Naive thymus-derived CD4-positive, alpha-beta T cell (primary cell): ENCODE measurements at regions of chr12 and their contacts with region 1.

Region 1: DNA sequence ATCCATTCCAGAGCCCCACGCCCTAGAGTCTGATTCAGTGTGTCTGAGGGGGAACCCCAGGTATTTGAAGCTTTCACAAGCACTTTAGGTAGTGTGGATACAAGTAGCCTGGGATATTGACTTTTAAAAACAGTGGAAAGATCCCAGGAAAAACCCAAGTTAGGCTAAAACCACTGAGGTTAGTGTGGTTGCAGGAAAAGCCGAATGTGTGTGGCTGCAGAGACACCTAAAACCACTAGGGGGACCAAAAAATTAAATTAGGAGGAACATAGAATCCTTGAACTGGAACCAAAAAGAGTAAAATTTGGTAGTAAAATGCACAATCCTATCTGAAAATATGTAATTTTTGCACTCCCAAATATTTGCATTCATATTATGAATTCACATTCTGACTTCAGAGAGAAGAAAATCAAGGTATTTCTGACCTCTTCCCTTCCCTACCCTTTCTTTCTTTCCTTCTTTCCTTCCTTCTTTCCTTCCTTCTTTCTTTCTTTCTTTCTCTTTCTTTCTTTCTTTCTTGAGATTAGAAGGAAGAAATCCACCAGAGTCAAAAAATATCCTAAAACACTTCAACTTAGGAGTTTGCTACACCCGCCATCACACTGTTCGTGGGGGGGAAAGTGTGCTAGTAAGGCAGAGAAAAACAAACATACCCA is 37.8 kb downstream of the SLCO1A2 start:
- DNase-seq: peak in 4 of 9 donors; percentile 4 to 14 (median 8)
- ATAC-seq: peak; percentile 38
- H3K4me3 ChIP-seq: no peak overlapping the region
- H3K4me3 Mint-ChIP-seq: no peak overlapping the region
- H3K27ac ChIP-seq: no peak overlapping the region
- H3K27ac Mint-ChIP-seq: no peak overlapping the region
- H3K4me1 ChIP-seq: no peaks in the 10 kb centered on the region
- H3K4me1 Mint-ChIP-seq: peaks cover 0 to 4% (median 0%) of the 10 kb centered on the region in 7 donors
- H3K27me3 ChIP-seq: no peaks in the 10 kb centered on the region
- H3K27me3 Mint-ChIP-seq: peaks cover 4 to 13% (median 6%) of the 10 kb centered on the region in 5 donors

Region 2: DNA sequence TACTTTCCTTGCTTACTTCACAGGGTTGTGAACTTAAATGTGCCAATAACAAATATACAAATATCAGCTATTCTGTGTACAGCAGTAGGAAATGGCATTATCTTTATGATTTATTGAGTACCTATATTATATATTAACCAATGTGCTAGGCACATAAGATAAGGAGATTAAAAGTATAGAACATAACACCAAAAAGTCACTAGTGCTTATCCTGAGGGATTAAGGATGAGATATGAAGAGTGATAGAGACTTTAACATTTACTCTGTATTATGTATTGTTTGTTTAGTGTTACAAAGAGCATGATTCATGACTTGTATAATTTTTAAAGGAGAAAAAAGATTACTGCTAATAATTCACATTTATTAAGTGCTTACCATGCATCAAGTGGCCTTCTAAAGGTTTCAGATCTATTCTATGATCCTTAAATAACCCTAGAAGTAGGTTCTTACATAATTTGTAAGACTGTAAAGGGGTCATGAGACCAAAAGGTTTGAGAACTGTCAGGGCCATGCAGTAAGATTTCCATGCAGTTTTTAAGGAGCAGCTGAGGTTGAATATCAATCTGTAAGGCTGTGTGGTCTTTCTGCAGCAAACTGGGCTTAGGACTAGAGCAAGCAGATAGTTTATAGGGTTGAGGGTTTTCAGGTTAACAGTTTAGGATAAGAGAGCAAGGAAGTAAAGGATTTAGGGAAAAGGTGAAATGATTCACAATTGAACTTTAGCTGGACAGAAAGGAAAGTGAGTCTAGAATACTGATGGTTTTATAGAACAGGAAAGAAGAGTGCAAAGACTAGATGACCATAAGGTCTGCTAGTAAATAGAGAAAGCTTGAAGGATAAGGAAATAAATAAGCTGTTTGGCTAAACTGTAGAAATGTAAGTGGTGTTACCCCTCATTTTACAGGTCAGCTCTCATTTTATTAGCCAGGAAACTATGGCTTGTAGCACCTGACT is 147.6 kb after region 1 on chr12:
- CTCF ChIA-PET with region 1: no interaction called
- POLR2A ChIA-PET with region 1: no interaction called
- intact Hi-C with region 1: loop called in 1 of 2 experiments (anchors 5 kb)
- DNase-seq: no peak
- ATAC-seq: no peak
- H3K4me3 ChIP-seq: no peak overlapping the region
- H3K4me3 Mint-ChIP-seq: no peak overlapping the region
- H3K27ac ChIP-seq: no peak overlapping the region
- H3K27ac Mint-ChIP-seq: peak overlapping the region in 5 of 9 donors; percentile 1 to 68 (median 47)
- H3K4me1 ChIP-seq: peaks cover 2 to 13% of the 10 kb centered on the region in 2 donors
- H3K4me1 Mint-ChIP-seq: peaks cover 22 to 56% (median 41%) of the 10 kb centered on the region in 7 donors
- H3K27me3 ChIP-seq: no peaks in the 10 kb centered on the region
- H3K27me3 Mint-ChIP-seq: no peaks in the 10 kb centered on the region

Region 3: GRCh38 chr12:21476949-21477348 is 180.1 kb after region 1 on chr12:
- CTCF ChIA-PET with region 1: no interaction called
- POLR2A ChIA-PET with region 1: no interaction called
- intact Hi-C with region 1: loop called in 1 of 2 experiments (anchors 2 kb)
- DNase-seq: no peak
- ATAC-seq: no peak
- H3K4me3 ChIP-seq: no peak overlapping the region
- H3K4me3 Mint-ChIP-seq: no peak overlapping the region
- H3K27ac ChIP-seq: no peak overlapping the region
- H3K27ac Mint-ChIP-seq: peak overlapping the region in 3 of 9 donors; percentile 39 to 73 (median 46)
- H3K4me1 ChIP-seq: no peaks in the 10 kb centered on the region
- H3K4me1 Mint-ChIP-seq: peaks cover 0 to 15% (median 0%) of the 10 kb centered on the region in 7 donors
- H3K27me3 ChIP-seq: no peaks in the 10 kb centered on the region
- H3K27me3 Mint-ChIP-seq: no peaks in the 10 kb centered on the region

Region 4: DNA sequence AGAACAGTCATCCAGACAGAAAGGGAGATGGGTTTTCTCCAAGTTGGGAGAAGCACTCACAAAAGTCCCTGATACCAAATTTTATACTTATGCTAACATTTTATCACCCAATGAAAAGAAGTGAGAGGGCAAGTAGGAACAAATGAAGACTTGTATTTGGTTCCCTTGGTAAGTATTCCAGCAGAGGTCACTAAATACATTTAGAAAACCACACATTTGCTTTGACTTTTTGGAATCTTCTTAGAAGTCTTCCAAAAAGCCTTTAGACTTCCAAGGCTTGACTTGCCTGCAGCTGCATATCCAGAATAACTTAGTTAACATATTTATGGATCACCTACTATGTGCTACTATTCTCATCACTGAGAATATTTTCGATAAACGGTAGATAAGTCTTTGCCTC is 310.8 kb after region 1 on chr12:
- CTCF ChIA-PET with region 1: no interaction called
- POLR2A ChIA-PET with region 1: no interaction called
- intact Hi-C with region 1: loop called in 1 of 2 experiments (anchors 10 kb)
- DNase-seq: peak in 6 of 9 donors; percentile 14 to 57 (median 43)
- ATAC-seq: no peak
- H3K4me3 ChIP-seq: no peak overlapping the region
- H3K4me3 Mint-ChIP-seq: no peak overlapping the region
- H3K27ac ChIP-seq: no peak overlapping the region
- H3K27ac Mint-ChIP-seq: no peak overlapping the region
- H3K4me1 ChIP-seq: peaks cover 0 to 10% of the 10 kb centered on the region in 2 donors
- H3K4me1 Mint-ChIP-seq: peaks cover 2 to 8% (median 7%) of the 10 kb centered on the region in 7 donors
- H3K27me3 ChIP-seq: no peaks in the 10 kb centered on the region
- H3K27me3 Mint-ChIP-seq: peaks cover 0 to 7% (median 0%) of the 10 kb centered on the region in 5 donors